Adrenal gland (tissue), 19 donors: ENCODE measurements at regions of chr12 and their contacts with region 1.

Region 1: DNA sequence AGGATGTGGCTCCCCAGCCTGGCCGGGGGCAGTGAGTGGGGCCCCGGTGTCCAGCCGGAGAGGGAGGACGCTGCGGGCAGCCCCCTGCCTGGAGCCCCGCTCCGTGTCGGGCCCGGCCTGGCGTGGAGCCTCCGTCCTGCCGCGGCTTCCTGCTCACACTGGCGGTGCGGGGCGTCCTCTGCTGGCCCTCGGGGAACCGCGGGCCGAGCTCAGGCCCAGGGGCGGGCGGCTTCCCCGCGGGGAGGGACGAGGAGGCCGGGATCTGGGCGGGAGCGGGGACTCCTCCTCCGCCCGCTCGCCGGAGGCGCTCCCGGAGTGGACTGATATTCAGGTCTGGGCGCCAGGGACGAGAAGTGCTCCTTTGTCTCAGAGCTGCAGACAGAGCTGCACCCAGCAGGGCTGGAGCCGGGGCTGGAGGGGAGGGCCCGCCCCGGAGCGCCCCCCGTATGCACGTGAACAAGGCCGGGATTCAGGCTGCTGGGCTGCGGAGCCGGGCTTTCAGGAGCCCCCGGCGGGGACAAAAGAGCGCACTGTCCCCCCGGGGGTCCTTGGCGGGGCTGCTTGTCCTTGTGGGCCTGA is 2.2 kb downstream of the MMP17 start:
- DNase-seq: peak; percentile 61 to 79 (median 63)
- H3K4me3 ChIP-seq: peak overlapping the region in 2 of 4 donors; percentile 1 to 38
- H3K27ac ChIP-seq: peak overlapping the region in 2 of 5 donors; percentile 17 to 50
- H3K4me1 ChIP-seq: peaks cover 4 to 30% of the 10 kb centered on the region in 2 donors
- H3K27me3 ChIP-seq: peaks cover 63% of the 10 kb centered on the region
- CTCF ChIP-seq: peak in 5 of 6 experiments; percentile 14 to 59 (median 23)
- POLR2A ChIP-seq: no peak

Region 2: GRCh38 chr12:131104463-131105350 is 725.7 kb before region 1 on chr12:
- intact Hi-C with region 1: loop called in 1 of 2 experiments (anchors 5 kb)
- DNase-seq: peak; percentile 74 to 92 (median 87)
- H3K4me3 ChIP-seq: no peak overlapping the region
- H3K27ac ChIP-seq: no peak overlapping the region
- H3K4me1 ChIP-seq: peaks cover 0 to 3% of the 10 kb centered on the region in 2 donors
- H3K27me3 ChIP-seq: no peaks in the 10 kb centered on the region
- CTCF ChIP-seq: peak; percentile 87 to 97 (median 92)
- POLR2A ChIP-seq: no peak

Region 3: DNA sequence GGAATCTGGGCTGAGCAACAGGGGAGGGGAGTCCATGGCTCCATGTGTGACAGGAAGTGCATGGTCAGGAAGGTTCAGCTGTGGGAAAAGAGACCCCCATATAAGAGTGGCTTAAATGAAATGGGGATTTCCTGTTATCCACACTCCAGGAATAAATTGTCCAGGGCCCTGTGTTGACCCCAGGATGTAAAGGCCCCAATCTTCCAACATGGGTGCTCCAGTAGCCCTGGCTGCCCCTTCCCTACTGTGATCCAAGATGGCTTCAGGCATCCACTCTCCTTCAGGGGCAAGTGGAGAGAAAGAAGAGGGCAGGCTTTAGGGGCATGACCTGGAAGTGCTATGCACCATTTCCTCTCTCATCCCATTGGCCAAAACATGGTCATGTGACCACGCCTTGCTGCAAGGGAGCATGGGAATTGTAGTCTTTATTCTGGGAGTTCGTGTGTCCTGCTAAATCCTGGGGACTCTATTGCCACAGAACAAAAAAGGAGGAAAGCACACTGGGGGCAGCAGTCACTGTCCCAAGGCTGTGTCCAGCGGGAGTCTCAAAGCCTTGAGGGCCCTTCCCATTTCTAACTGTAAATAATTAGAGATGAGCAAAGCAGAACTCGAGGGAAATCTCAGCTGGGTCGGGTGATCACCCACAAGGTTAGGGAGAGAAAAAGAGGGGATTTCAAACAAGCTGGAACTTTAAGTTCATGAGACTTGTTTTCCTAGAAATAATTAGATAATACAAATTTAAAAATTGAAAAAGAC is 587.5 kb before region 1 on chr12:
- intact Hi-C with region 1: no loop called
- DNase-seq: peak in 1 of 7 donors; percentile 72
- H3K4me3 ChIP-seq: no peak overlapping the region
- H3K27ac ChIP-seq: no peak overlapping the region
- H3K4me1 ChIP-seq: no peaks in the 10 kb centered on the region
- H3K27me3 ChIP-seq: peaks cover 4% of the 10 kb centered on the region
- CTCF ChIP-seq: no peak
- POLR2A ChIP-seq: no peak

Region 4: GRCh38 chr12:131737142-131737827 is 93.1 kb before region 1 on chr12:
- intact Hi-C with region 1: no loop called
- DNase-seq: peak in 2 of 7 donors; percentile 19 to 51
- H3K4me3 ChIP-seq: no peak overlapping the region
- H3K27ac ChIP-seq: no peak overlapping the region
- H3K4me1 ChIP-seq: no peaks in the 10 kb centered on the region
- H3K27me3 ChIP-seq: no peaks in the 10 kb centered on the region
- CTCF ChIP-seq: no peak
- POLR2A ChIP-seq: no peak

Region 5: DNA sequence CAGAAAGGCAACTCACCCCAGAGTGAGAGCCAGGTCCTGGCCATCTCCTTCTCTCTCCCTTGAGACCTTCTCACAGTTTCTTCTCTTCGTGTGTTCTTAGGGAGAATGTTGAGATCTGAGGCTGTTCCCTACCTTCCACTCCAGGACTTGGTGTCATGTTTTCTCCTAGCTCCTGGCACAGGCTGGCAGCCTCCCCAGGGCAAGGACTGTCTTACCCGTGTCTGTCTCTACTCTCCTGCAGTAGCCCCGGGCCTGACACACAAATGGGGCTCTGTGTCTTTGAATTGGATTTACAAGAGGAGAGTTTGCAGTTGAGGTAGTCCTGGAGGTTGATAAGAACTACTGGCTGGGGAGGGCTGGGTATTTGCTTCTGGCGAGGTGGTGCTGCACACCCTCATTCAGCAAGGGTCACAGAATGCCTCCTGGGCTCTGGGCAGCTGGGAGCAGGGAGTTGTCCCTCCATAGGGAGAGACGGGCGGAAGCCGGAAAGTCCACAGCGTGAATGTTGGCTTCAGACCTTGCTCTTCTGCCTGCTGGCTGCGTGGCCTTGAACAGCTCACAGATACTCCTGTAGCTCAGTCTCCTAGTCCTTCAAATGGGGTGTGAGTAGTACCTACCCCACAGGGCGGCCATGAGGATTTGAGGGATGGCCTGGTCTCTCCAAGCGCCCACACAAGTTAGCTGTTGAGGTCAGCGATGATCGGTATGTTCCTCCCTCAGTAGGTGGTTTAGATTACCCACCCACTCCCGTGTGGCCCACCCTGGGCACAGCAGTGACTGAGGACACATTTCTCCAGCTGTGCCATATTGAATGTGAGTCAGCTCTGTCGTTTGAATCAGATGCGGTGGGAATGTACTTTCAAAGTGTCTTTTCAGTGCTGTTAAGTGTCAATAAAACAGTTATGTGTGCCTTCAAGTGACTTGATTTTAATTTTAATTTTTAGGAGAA is 129.5 kb after region 1 on chr12:
- intact Hi-C with region 1: no loop called
- DNase-seq: peak; percentile 38 to 78 (median 64)
- H3K4me3 ChIP-seq: no peak overlapping the region
- H3K27ac ChIP-seq: peak overlapping the region in 2 of 5 donors; percentile 59 to 68
- H3K4me1 ChIP-seq: peaks cover 25 to 61% of the 10 kb centered on the region in 2 donors
- H3K27me3 ChIP-seq: no peaks in the 10 kb centered on the region
- CTCF ChIP-seq: no peak
- POLR2A ChIP-seq: no peak